ENCODE measurements at regions of chr16 and their contacts with region 1.

Region 1: GRCh38 chr16:4517812-4518680 is 20.5 kb downstream of the CDIP1 start:
- DNase-seq: peak; percentile 49
- H3K4me3 ChIP-seq: no peak overlapping the region
- H3K27ac ChIP-seq: no peak overlapping the region
- H3K4me1 ChIP-seq: peaks cover 9% of the 10 kb centered on the region
- CTCF ChIP-seq: peak; percentile 87

Region 2: GRCh38 chr16:4487955-4488498 is 30.0 kb before region 1 on chr16:
- CTCF ChIA-PET with region 1: no interaction called
- POLR2A ChIA-PET with region 1: no interaction called
- intact Hi-C with region 1: no loop called
- DNase-seq: no peak
- H3K4me3 ChIP-seq: no peak overlapping the region
- H3K27ac ChIP-seq: no peak overlapping the region
- H3K4me1 ChIP-seq: no peaks in the 10 kb centered on the region
- CTCF ChIP-seq: no peak

Region 3: DNA sequence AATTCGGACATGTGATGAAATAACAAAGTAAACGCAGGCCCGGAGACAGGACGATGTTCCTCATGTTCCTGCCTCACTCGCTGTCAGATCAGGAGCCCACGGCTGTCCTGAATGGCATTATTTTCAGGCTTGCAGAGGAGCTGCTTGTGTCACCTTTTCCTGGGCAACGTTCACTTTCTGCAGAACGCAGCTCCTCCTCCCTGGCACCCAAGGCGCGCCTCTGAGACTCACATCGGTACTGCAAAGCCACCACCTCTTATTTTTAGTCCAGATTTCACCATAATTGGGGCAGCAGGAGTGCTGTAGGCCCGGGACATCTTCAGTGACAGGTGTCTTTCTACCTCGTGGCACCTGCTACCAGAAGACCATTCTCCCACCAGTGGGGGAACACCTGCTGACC is 30.1 kb after region 1 on chr16:
- CTCF ChIA-PET with region 1: interaction called, 5 read pairs
- POLR2A ChIA-PET with region 1: interaction called, 3 read pairs
- intact Hi-C with region 1: loop called (anchors 1 kb)
- DNase-seq: no peak
- H3K4me3 ChIP-seq: no peak overlapping the region
- H3K27ac ChIP-seq: no peak overlapping the region
- H3K4me1 ChIP-seq: peaks cover 27% of the 10 kb centered on the region
- CTCF ChIP-seq: no peak

Region 4: GRCh38 chr16:4580245-4580644 is 62.2 kb after region 1 on chr16:
- CTCF ChIA-PET with region 1: no interaction called
- POLR2A ChIA-PET with region 1: no interaction called
- intact Hi-C with region 1: loop called (anchors 1 kb)
- DNase-seq: no peak
- H3K4me3 ChIP-seq: no peak overlapping the region
- H3K27ac ChIP-seq: no peak overlapping the region
- H3K4me1 ChIP-seq: no peaks in the 10 kb centered on the region
- CTCF ChIP-seq: no peak